H1 (cell line): ENCODE measurements at regions of chr5 and their contacts with region 1.

Region 1: DNA sequence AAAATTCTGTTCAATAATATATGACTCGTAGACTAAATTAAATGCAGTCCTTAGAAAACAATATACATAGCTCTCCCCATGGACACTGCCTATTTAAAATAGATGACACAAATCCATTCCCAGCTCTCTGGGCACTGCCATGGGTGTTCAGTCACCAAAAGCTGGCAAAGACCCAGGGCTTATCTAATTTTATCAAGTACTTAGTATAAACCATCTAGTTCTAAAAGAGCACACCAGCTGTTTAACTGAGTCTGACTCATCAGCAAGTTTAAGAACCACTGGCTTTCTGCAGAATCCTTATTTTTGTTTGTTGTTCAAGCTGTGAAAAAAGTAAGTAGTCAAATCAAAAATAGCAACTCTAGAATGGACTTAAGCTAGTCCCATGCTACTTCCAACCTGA is 107.6 kb downstream of the PLPP1 start:
- DNase-seq: no peak
- H3K4me3 ChIP-seq: no peak overlapping the region
- H3K27ac ChIP-seq: no peak overlapping the region
- H3K4me1 ChIP-seq: no peaks in the 10 kb centered on the region; a peak in 1 of 7 replicates
- H3K27me3 ChIP-seq: no peaks in the 10 kb centered on the region
- CTCF ChIP-seq: no peak
- EP300 ChIP-seq: no peak
- POLR2A ChIP-seq: no peak
- RAD21 ChIP-seq: no peak

Region 2: GRCh38 chr5:55331321-55331720 is 95.8 kb before region 1 on chr5:
- CTCF ChIA-PET with region 1: no interaction called
- POLR2A ChIA-PET with region 1: no interaction called
- DNase-seq: no peak
- H3K4me3 ChIP-seq: no peak overlapping the region
- H3K27ac ChIP-seq: no peak overlapping the region
- H3K4me1 ChIP-seq: no peaks in the 10 kb centered on the region
- H3K27me3 ChIP-seq: peaks cover 0 to 1% (median 0%) of the 10 kb centered on the region in 4 experiments; a peak in 1 of 7 replicates
- CTCF ChIP-seq: no peak
- EP300 ChIP-seq: no peak
- POLR2A ChIP-seq: no peak
- RAD21 ChIP-seq: no peak

Region 3: GRCh38 chr5:55439008-55439407 is 11.9 kb after region 1 on chr5:
- CTCF ChIA-PET with region 1: no interaction called
- POLR2A ChIA-PET with region 1: interaction called, 10 read pairs
- DNase-seq: peak in 1 of 2 experiments; percentile 15
- H3K4me3 ChIP-seq: no peak overlapping the region
- H3K27ac ChIP-seq: no peak overlapping the region; the same call in 1 of the 2 replicates
- H3K4me1 ChIP-seq: peaks cover 5 to 19% (median 11%) of the 10 kb centered on the region in 4 experiments; a peak in 6 of 7 replicates
- H3K27me3 ChIP-seq: no peaks in the 10 kb centered on the region
- CTCF ChIP-seq: no peak
- EP300 ChIP-seq: no peak
- POLR2A ChIP-seq: no peak
- RAD21 ChIP-seq: no peak